ENCODE measurements at regions of chr10 and their contacts with region 1.

Region 1: GRCh38 chr10:125565046-125565445 is 117.9 kb downstream of the TEX36 start:
- DNase-seq: no peak
- H3K4me3 ChIP-seq: no peak overlapping the region
- H3K27ac ChIP-seq: no peak overlapping the region
- H3K4me1 ChIP-seq: no peaks in the 10 kb centered on the region
- H3K27me3 ChIP-seq: no peaks in the 10 kb centered on the region
- CTCF ChIP-seq: no peak
- POLR2A ChIP-seq: no peak

Region 2: GRCh38 chr10:123721430-123722257 is 1843.4 kb before region 1 on chr10:
- intact Hi-C with region 1: no loop called
- DNase-seq: no peak
- H3K4me3 ChIP-seq: no peak overlapping the region
- H3K27ac ChIP-seq: no peak overlapping the region
- H3K4me1 ChIP-seq: no peaks in the 10 kb centered on the region
- H3K27me3 ChIP-seq: no peaks in the 10 kb centered on the region
- CTCF ChIP-seq: no peak
- POLR2A ChIP-seq: no peak

Region 3: DNA sequence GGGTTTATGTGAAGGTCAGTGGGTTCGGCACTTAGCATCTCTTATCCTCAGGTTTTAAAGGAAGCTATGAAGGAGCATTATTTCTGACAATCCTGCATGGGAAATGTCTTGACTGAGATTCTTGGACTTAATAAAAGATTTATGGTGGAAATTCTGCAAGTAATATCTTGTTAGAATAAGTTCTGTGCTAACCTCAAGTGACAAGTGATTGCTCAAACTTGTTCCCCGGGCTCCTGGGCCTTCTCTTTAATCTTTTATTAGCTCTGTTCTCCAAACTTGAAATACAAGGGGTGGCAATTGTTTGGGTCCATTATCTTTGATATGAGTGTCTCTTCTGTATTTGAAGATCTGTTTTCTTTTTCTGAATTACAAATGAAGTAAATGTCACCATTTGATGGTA is 264.1 kb before region 1 on chr10:
- intact Hi-C with region 1: loop called (anchors 5 kb)
- DNase-seq: no peak
- H3K4me3 ChIP-seq: no peak overlapping the region
- H3K27ac ChIP-seq: no peak overlapping the region
- H3K4me1 ChIP-seq: no peaks in the 10 kb centered on the region
- H3K27me3 ChIP-seq: no peaks in the 10 kb centered on the region
- CTCF ChIP-seq: no peak
- POLR2A ChIP-seq: no peak

Measured in breast epithelium (tissue), 4 donors.